ENCODE measurements at regions of chr17 and their contacts with region 1.

Region 1: GRCh38 chr17:49694847-49695683 is 12.7 kb downstream of the SLC35B1 start:
- DNase-seq: peak; percentile 63 to 71
- H3K4me3 ChIP-seq: no peak overlapping the region
- H3K27ac ChIP-seq: peak overlapping the region in 1 of 2 donors; percentile 8
- H3K4me1 ChIP-seq: peaks cover 9 to 12% of the 10 kb centered on the region in 2 donors
- H3K27me3 ChIP-seq: no peaks in the 10 kb centered on the region
- CTCF ChIP-seq: peak; percentile 93 to 96 (median 94)
- POLR2A ChIP-seq: no peak

Region 2: DNA sequence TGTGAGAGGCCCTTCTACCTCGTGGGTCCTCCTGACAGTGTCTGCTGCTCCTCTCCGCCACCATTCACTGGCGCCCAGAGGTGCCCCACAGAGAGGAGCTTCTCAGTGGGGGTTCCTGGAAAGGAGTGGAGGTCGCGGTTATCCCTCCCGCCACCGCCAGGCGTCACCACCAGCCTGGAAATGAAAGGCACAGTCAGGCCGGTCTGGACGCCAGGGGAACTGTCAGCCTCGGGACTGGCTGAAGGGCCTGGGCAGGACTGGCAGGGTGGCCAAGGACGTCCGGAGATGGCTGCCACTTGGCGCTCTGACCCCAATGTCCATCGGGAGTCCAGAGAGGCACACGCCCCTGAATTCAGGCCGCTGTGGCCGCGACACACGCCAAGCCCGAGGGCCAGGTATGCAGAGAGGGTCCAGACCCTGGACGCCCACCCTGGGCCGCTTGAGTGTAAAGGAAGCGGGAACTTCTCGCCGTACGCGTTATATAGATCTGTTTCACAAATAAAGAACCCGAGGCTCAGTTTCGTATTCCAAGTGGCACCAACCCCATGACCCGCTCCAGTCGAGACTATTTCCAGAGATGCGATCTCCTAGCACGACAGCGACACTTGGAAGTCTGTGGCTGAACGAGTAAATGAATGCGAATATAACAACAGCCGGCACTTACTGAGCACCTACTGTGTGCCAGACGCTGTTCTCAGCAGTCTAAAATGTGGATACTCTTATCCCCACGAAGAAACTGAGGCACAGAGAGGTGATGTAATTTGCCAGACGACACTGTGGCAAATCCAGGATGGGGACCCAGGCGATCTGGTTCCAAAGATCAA is 127.0 kb before region 1 on chr17:
- intact Hi-C with region 1: loop called (anchors 1 kb)
- DNase-seq: peak; percentile 90
- H3K4me3 ChIP-seq: peak overlapping the region in 1 of 2 donors; percentile 23
- H3K27ac ChIP-seq: peak overlapping the region; percentile 80 to 81
- H3K4me1 ChIP-seq: peaks cover 0 to 10% of the 10 kb centered on the region in 2 donors
- H3K27me3 ChIP-seq: no peaks in the 10 kb centered on the region
- CTCF ChIP-seq: peak; percentile 97 to 100 (median 98)
- POLR2A ChIP-seq: no peak

Measured in uterus (tissue), 4 donors.